Activated CD4-positive, alpha-beta T cell treated with anti-CD3 and anti-CD28 coated beads for 36 hours (primary cell): ENCODE measurements at regions of chr16 and their contacts with region 1.

Region 1: GRCh38 chr16:29825145-29826044 is 5.1 kb downstream of the MVP start:
- DNase-seq: peak; percentile 72
- ATAC-seq: peak; percentile 57
- H3K4me3 Mint-ChIP-seq: peak overlapping the region; percentile 53
- H3K27ac Mint-ChIP-seq: peak overlapping the region; percentile 91
- H3K4me1 Mint-ChIP-seq: peaks cover 78% of the 10 kb centered on the region
- H3K27me3 Mint-ChIP-seq: no peaks in the 10 kb centered on the region

Region 2: GRCh38 chr16:29007730-29008593 is 817.4 kb before region 1 on chr16:
- CTCF ChIA-PET with region 1: no interaction called
- POLR2A ChIA-PET with region 1: interaction called, 3 read pairs
- intact Hi-C with region 1: loop called in 1 of 2 experiments (anchors 2 kb)
- DNase-seq: peak; percentile 89
- ATAC-seq: peak; percentile 91
- H3K4me3 Mint-ChIP-seq: peak overlapping the region; percentile 33
- H3K27ac Mint-ChIP-seq: peak overlapping the region; percentile 91
- H3K4me1 Mint-ChIP-seq: peaks cover 63% of the 10 kb centered on the region
- H3K27me3 Mint-ChIP-seq: no peaks in the 10 kb centered on the region

Region 3: GRCh38 chr16:29729116-29729521 is 96.3 kb before region 1 on chr16:
- CTCF ChIA-PET with region 1: interaction called, 3 read pairs
- POLR2A ChIA-PET with region 1: interaction called, 5 read pairs
- intact Hi-C with region 1: loop called in 1 of 2 experiments (anchors 1 kb)
- DNase-seq: no peak
- ATAC-seq: no peak
- H3K4me3 Mint-ChIP-seq: no peak overlapping the region
- H3K27ac Mint-ChIP-seq: no peak overlapping the region
- H3K4me1 Mint-ChIP-seq: peaks cover 37% of the 10 kb centered on the region
- H3K27me3 Mint-ChIP-seq: no peaks in the 10 kb centered on the region

Region 4: DNA sequence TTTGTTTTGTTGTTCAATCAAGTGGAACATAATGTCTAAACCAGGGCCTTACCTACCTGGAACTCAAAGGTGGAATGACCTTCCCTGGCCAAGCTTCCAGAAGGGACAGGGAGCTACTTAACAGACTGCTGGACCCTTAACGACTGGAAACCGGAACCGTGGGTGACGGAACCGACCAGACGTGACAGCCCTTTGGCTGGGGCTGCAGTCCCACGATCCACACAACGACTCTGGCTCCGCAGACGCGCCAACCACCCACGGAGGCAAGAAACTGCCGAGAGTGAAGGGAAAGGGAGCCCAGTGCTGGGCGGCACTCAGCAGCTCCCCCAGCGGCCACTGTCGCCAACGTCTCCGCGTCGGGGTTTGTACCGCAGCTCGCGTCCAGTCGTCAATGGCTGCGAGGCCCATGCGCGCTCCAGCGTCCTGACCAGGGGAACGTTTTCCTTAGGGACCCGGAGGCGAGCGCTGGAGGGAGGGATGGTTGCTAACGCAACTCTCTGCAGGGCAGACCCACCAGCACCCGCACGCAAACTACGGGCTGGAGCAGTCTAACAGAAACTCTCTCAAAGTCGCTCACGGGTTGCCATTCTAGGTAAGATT is 40.4 kb before region 1 on chr16:
- CTCF ChIA-PET with region 1: interaction called, 7 read pairs
- POLR2A ChIA-PET with region 1: no interaction called
- intact Hi-C with region 1: loop called in 1 of 2 experiments (anchors 2 kb)
- DNase-seq: peak; percentile 89
- ATAC-seq: peak; percentile 79
- H3K4me3 Mint-ChIP-seq: peak overlapping the region; percentile 51
- H3K27ac Mint-ChIP-seq: no peak overlapping the region
- H3K4me1 Mint-ChIP-seq: peaks cover 29% of the 10 kb centered on the region
- H3K27me3 Mint-ChIP-seq: no peaks in the 10 kb centered on the region

Region 5: GRCh38 chr16:30122604-30123160 is 297.3 kb after region 1 on chr16:
- CTCF ChIA-PET with region 1: no interaction called
- POLR2A ChIA-PET with region 1: no interaction called
- intact Hi-C with region 1: no loop called
- DNase-seq: peak; percentile 35
- ATAC-seq: peak; percentile 37
- H3K4me3 Mint-ChIP-seq: peak overlapping the region; percentile 87
- H3K27ac Mint-ChIP-seq: peak overlapping the region; percentile 89
- H3K4me1 Mint-ChIP-seq: peaks cover 17% of the 10 kb centered on the region
- H3K27me3 Mint-ChIP-seq: no peaks in the 10 kb centered on the region